Breast epithelium (tissue), 4 donors: ENCODE measurements at regions of chrX and their contacts with region 1.

Region 1: GRCh38 chrX:142068365-142068764 is 136.7 kb downstream of the MAGEC2 start:
- DNase-seq: no peak
- H3K4me3 ChIP-seq: no peak overlapping the region
- H3K27ac ChIP-seq: no peak overlapping the region
- H3K4me1 ChIP-seq: no peaks in the 10 kb centered on the region
- H3K27me3 ChIP-seq: peaks cover 0 to 11% of the 10 kb centered on the region in 2 donors
- CTCF ChIP-seq: no peak
- POLR2A ChIP-seq: no peak

Region 2: GRCh38 chrX:141879616-141880015 is 188.7 kb before region 1 on chrX:
- intact Hi-C with region 1: loop called (anchors 5 kb)
- DNase-seq: no peak
- H3K4me3 ChIP-seq: no peak overlapping the region
- H3K27ac ChIP-seq: no peak overlapping the region
- H3K4me1 ChIP-seq: no peaks in the 10 kb centered on the region
- H3K27me3 ChIP-seq: peaks cover 0 to 25% of the 10 kb centered on the region in 2 donors
- CTCF ChIP-seq: no peak
- POLR2A ChIP-seq: no peak

Region 3: GRCh38 chrX:142256935-142257334 is 188.6 kb after region 1 on chrX:
- intact Hi-C with region 1: no loop called
- DNase-seq: no peak
- H3K4me3 ChIP-seq: no peak overlapping the region
- H3K27ac ChIP-seq: no peak overlapping the region
- H3K4me1 ChIP-seq: no peaks in the 10 kb centered on the region
- H3K27me3 ChIP-seq: peaks cover 0 to 14% of the 10 kb centered on the region in 2 donors
- CTCF ChIP-seq: no peak
- POLR2A ChIP-seq: no peak

Region 4: GRCh38 chrX:142831961-142832530 is 763.7 kb after region 1 on chrX:
- intact Hi-C with region 1: no loop called
- DNase-seq: no peak
- H3K4me3 ChIP-seq: no peak overlapping the region
- H3K27ac ChIP-seq: no peak overlapping the region
- H3K4me1 ChIP-seq: no peaks in the 10 kb centered on the region
- H3K27me3 ChIP-seq: peaks cover 0 to 7% of the 10 kb centered on the region in 2 donors
- CTCF ChIP-seq: no peak
- POLR2A ChIP-seq: no peak